ENCODE measurements at regions of chr17 and their contacts with region 1.

Region 1: GRCh38 chr17:68101075-68101992 is 65.8 kb downstream of the KPNA2 start:
- DNase-seq: peak in 8 of 9 donors; percentile 36 to 71 (median 46)
- ATAC-seq: peak; percentile 92
- H3K4me3 ChIP-seq: peak overlapping the region; percentile 75
- H3K4me3 Mint-ChIP-seq: peak overlapping the region; percentile 86 to 99 (median 95)
- H3K27ac ChIP-seq: peak overlapping the region; percentile 85
- H3K27ac Mint-ChIP-seq: peak overlapping the region; percentile 83 to 98 (median 95)
- H3K4me1 ChIP-seq: peaks cover 3 to 20% of the 10 kb centered on the region in 2 donors
- H3K4me1 Mint-ChIP-seq: peaks cover 15 to 42% (median 33%) of the 10 kb centered on the region in 7 donors
- H3K27me3 ChIP-seq: no peaks in the 10 kb centered on the region
- H3K27me3 Mint-ChIP-seq: peaks cover 0 to 12% (median 0%) of the 10 kb centered on the region in 5 donors

Region 2: GRCh38 chr17:68085767-68086381 is 15.5 kb before region 1 on chr17:
- CTCF ChIA-PET with region 1: no interaction called
- POLR2A ChIA-PET with region 1: interaction called, 4 read pairs
- intact Hi-C with region 1: loop called in 1 of 2 experiments (anchors 2 kb)
- DNase-seq: peak in 2 of 9 donors; percentile 14 to 15
- ATAC-seq: peak; percentile 38
- H3K4me3 ChIP-seq: no peak overlapping the region
- H3K4me3 Mint-ChIP-seq: peak overlapping the region; percentile 72 to 84 (median 78)
- H3K27ac ChIP-seq: no peak overlapping the region
- H3K27ac Mint-ChIP-seq: peak overlapping the region; percentile 11 to 79 (median 56)
- H3K4me1 ChIP-seq: peaks cover 24 to 25% of the 10 kb centered on the region in 2 donors
- H3K4me1 Mint-ChIP-seq: peaks cover 39 to 55% (median 45%) of the 10 kb centered on the region in 7 donors
- H3K27me3 ChIP-seq: no peaks in the 10 kb centered on the region
- H3K27me3 Mint-ChIP-seq: peaks cover 0 to 2% (median 0%) of the 10 kb centered on the region in 5 donors

Region 3: GRCh38 chr17:68161644-68162428 is 60.5 kb after region 1 on chr17:
- CTCF ChIA-PET with region 1: no interaction called
- POLR2A ChIA-PET with region 1: no interaction called
- intact Hi-C with region 1: no loop called
- DNase-seq: no peak
- ATAC-seq: no peak
- H3K4me3 ChIP-seq: no peak overlapping the region
- H3K4me3 Mint-ChIP-seq: no peak overlapping the region
- H3K27ac ChIP-seq: no peak overlapping the region
- H3K27ac Mint-ChIP-seq: no peak overlapping the region
- H3K4me1 ChIP-seq: peaks cover 0 to 7% of the 10 kb centered on the region in 2 donors
- H3K4me1 Mint-ChIP-seq: peaks cover 3 to 8% (median 5%) of the 10 kb centered on the region in 7 donors
- H3K27me3 ChIP-seq: no peaks in the 10 kb centered on the region
- H3K27me3 Mint-ChIP-seq: peaks cover 0 to 6% (median 0%) of the 10 kb centered on the region in 5 donors